ENCODE measurements at regions of chr1 and their contacts with region 1.

Region 1: DNA sequence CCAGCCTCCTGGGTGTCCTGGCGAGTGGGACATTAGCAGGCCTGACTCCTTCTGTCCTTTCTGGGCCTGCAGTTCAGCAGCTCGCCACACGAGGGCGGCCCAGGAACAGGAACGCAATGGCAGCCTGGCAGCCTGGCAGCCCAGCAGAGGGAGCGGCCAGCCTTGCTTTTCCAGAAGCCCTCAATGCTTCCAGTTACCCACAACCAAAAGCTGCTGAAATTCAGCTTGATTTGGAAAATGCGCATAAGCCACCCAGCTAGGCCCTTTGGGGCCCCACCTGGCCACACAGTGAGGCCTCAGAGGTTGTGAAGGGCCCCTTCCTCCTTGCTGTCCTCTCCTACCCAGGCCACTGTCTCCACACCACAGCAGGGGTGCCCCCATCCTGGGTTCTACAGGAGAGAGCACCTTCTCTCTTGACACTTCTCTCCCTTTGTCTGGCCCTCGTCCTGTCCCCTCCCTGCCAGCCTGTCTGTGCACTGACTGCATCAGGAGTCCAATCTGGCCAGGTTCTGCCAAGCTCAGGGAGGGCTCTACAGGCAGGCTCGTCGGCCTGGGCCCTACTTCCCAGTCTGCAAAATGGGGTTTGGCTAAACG is 103.4 kb upstream of the VAMP3 start:
- DNase-seq: peak; percentile 79 to 85 (median 80)
- H3K4me3 ChIP-seq: no peak overlapping the region
- H3K27ac ChIP-seq: no peak overlapping the region
- H3K4me1 ChIP-seq: peaks cover 0 to 14% (median 8%) of the 10 kb centered on the region in 4 experiments
- H3K27me3 ChIP-seq: peaks cover 0 to 2% (median 0%) of the 10 kb centered on the region in 5 experiments

Region 2: GRCh38 chr1:7680207-7680954 is 12.7 kb after region 1 on chr1:
- CTCF ChIA-PET with region 1: interaction called, 98 read pairs
- POLR2A ChIA-PET with region 1: no interaction called
- DNase-seq: peak; percentile 44 to 75 (median 63)
- H3K4me3 ChIP-seq: peak overlapping the region; percentile 43 to 78 (median 71)
- H3K27ac ChIP-seq: peak overlapping the region in 1 of 2 experiments; percentile 49
- H3K4me1 ChIP-seq: peaks cover 0 to 15% (median 10%) of the 10 kb centered on the region in 4 experiments
- H3K27me3 ChIP-seq: peaks cover 0 to 13% (median 0%) of the 10 kb centered on the region in 5 experiments

Region 3: GRCh38 chr1:7710859-7711258 is 43.1 kb after region 1 on chr1:
- CTCF ChIA-PET with region 1: interaction called, 11 read pairs
- POLR2A ChIA-PET with region 1: no interaction called
- DNase-seq: no peak
- H3K4me3 ChIP-seq: no peak overlapping the region
- H3K27ac ChIP-seq: no peak overlapping the region
- H3K4me1 ChIP-seq: peaks cover 0 to under 1% (median 0%) of the 10 kb centered on the region in 4 experiments
- H3K27me3 ChIP-seq: peaks cover 0 to 19% (median 7%) of the 10 kb centered on the region in 5 experiments

Region 4: GRCh38 chr1:7743346-7743745 is 75.6 kb after region 1 on chr1:
- CTCF ChIA-PET with region 1: interaction called, 536 read pairs
- POLR2A ChIA-PET with region 1: no interaction called
- DNase-seq: no peak
- H3K4me3 ChIP-seq: no peak overlapping the region
- H3K27ac ChIP-seq: no peak overlapping the region
- H3K4me1 ChIP-seq: peaks cover 0 to 12% (median 7%) of the 10 kb centered on the region in 4 experiments
- H3K27me3 ChIP-seq: no peaks in the 10 kb centered on the region

Region 5: DNA sequence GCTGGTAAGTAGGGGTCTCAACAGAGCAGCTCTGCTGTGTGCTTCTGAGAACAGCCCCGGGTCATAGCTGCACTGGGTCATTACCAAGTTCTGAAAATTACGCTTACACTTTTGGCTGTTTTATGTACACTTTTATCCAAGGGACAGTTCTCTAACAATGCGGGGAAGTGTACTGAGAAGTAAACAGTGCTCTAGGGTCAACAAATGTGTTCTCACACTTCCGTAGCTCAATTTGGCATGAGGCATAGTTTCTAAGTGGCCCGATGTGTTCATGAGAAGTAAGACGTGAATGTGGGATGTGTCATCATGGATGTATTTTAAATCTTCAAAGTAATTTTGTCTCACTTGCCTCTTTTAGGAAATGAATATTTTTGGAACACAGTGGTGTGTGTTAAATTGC is 92.5 kb after region 1 on chr1:
- CTCF ChIA-PET with region 1: interaction called, 536 read pairs
- POLR2A ChIA-PET with region 1: no interaction called
- DNase-seq: no peak
- H3K4me3 ChIP-seq: no peak overlapping the region
- H3K27ac ChIP-seq: no peak overlapping the region
- H3K4me1 ChIP-seq: no peaks in the 10 kb centered on the region
- H3K27me3 ChIP-seq: no peaks in the 10 kb centered on the region

Measured in common myeloid progenitor, CD34-positive (primary cell).